ENCODE measurements at regions of chr5 and their contacts with region 1.

Region 1: GRCh38 chr5:142087920-142088679 is 20.5 kb upstream of the NDFIP1 start:
- DNase-seq: peak; percentile 64
- H3K4me3 Mint-ChIP-seq: no peak overlapping the region
- H3K27ac Mint-ChIP-seq: peak overlapping the region; percentile 90
- H3K4me1 Mint-ChIP-seq: peaks cover 52% of the 10 kb centered on the region
- H3K27me3 Mint-ChIP-seq: no peaks in the 10 kb centered on the region

Region 2: GRCh38 chr5:142073362-142073988 is 14.6 kb before region 1 on chr5:
- CTCF ChIA-PET with region 1: interaction called, 3 read pairs
- intact Hi-C with region 1: loop called (anchors 2 kb)
- DNase-seq: no peak
- H3K4me3 Mint-ChIP-seq: no peak overlapping the region
- H3K27ac Mint-ChIP-seq: no peak overlapping the region
- H3K4me1 Mint-ChIP-seq: peaks cover 38% of the 10 kb centered on the region
- H3K27me3 Mint-ChIP-seq: no peaks in the 10 kb centered on the region

Measured in activated naive CD4-positive, alpha-beta T cell treated with anti-CD3 and anti-CD28 coated beads for 36 hours (primary cell).